GM12878 (cell line): ENCODE measurements at regions of chr14 and their contacts with region 1.

Region 1: DNA sequence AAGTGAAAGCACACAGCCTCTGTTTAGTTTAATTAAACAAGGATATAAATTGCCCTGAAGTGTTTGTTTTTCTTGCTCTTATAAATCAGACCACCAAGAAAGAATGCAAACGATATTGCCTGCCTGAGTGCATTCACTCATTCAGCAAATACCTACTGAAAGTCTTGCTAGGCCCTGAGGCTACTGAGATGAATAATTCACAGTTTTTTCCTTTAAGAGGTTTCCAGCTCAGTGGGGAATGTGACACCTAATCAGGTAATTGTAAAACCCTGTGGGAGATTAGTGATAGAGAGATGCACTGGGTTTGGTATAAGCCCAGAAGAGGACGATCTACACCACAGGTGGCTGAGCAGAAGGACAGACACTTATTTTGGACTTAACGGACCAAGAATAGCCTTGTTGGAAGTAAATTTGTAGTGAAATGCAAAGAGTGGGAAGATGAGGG is 151.4 kb downstream of the SLC35F4 start:
- DNase-seq: no peak
- ATAC-seq: no peak
- H3K4me3 ChIP-seq: no peak overlapping the region
- H3K27ac ChIP-seq: no peak overlapping the region
- H3K4me1 ChIP-seq: no peaks in the 10 kb centered on the region
- H3K27me3 ChIP-seq: no peaks in the 10 kb centered on the region
- CTCF ChIP-seq: no peak
- EP300 ChIP-seq: no peak
- POLR2A ChIP-seq: no peak
- RAD21 ChIP-seq: no peak

Region 2: DNA sequence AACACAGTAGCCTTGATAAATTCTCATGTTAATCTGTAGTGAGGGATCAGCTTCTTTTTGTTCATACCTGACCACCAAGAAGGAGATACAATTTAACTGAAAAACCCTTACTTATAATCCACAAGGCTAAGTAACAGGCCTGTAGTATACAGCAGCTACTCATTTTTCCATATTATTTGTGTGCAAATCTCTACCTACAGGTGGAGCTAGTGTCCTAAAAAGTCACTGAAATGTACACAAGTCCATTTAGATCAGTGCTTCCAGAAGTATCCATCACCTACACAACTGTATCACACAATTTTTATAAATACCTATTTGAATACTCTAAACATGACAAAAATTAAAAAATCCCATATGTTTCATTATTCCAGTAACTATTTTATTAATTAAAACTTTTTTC is 21.8 kb before region 1 on chr14:
- CTCF ChIA-PET with region 1: interaction called, 8 read pairs
- POLR2A ChIA-PET with region 1: no interaction called
- RAD21 ChIA-PET with region 1: no interaction called
- SMC1A ChIA-PET with region 1: interaction called, 10 read pairs
- in situ Hi-C with region 1: no loop called
- intact Hi-C with region 1: no loop called
- DNase-seq: no peak
- ATAC-seq: peak; percentile 61
- H3K4me3 ChIP-seq: no peak overlapping the region
- H3K27ac ChIP-seq: no peak overlapping the region
- H3K4me1 ChIP-seq: no peaks in the 10 kb centered on the region
- H3K27me3 ChIP-seq: no peaks in the 10 kb centered on the region
- CTCF ChIP-seq: peak; percentile 33 to 40 (median 35); a peak in 4 of 6 replicates
- EP300 ChIP-seq: no peak
- POLR2A ChIP-seq: no peak
- RAD21 ChIP-seq: peak; percentile 56; the same call in 1 of the 2 replicates

Region 3: DNA sequence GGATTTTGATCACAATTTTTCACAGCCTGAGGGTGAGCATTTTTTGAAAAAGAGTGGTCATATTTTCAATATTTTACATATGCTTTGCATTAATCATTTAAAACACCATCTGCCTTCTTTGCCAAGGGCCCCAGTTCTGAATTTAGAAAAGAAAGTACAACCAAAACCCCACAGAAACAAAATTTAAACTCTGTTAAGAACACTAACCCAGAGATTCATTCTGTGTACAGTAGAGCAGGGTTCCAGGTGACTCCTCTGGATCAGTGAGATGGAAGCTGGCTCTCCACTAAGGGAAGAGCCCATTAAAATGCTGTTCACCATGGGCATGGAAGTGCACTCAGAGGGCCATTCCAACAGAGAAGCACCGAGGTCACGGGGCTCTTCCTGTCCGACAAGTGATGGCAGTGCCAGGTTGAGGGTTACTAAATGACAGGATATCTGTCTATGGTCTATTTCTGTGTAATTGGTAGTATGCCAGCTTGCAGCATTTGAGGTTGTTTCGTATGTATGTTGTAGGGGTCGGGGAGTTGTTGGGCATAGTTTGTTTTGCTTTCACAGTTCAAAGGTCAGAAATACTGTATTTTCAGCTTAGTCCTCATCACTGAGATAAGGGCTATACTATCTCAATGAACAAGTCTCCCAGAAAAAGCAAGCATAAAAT is 55.5 kb after region 1 on chr14:
- CTCF ChIA-PET with region 1: no interaction called
- POLR2A ChIA-PET with region 1: no interaction called
- RAD21 ChIA-PET with region 1: no interaction called
- SMC1A ChIA-PET with region 1: no interaction called
- in situ Hi-C with region 1: no loop called
- intact Hi-C with region 1: loop called (anchors 10 kb)
- DNase-seq: no peak
- ATAC-seq: peak; percentile 50
- H3K4me3 ChIP-seq: no peak overlapping the region
- H3K27ac ChIP-seq: no peak overlapping the region
- H3K4me1 ChIP-seq: no peaks in the 10 kb centered on the region
- H3K27me3 ChIP-seq: no peaks in the 10 kb centered on the region
- CTCF ChIP-seq: no peak
- EP300 ChIP-seq: no peak
- POLR2A ChIP-seq: no peak
- RAD21 ChIP-seq: no peak